ENCODE measurements at regions of chr10 and their contacts with region 1.

Region 1: DNA sequence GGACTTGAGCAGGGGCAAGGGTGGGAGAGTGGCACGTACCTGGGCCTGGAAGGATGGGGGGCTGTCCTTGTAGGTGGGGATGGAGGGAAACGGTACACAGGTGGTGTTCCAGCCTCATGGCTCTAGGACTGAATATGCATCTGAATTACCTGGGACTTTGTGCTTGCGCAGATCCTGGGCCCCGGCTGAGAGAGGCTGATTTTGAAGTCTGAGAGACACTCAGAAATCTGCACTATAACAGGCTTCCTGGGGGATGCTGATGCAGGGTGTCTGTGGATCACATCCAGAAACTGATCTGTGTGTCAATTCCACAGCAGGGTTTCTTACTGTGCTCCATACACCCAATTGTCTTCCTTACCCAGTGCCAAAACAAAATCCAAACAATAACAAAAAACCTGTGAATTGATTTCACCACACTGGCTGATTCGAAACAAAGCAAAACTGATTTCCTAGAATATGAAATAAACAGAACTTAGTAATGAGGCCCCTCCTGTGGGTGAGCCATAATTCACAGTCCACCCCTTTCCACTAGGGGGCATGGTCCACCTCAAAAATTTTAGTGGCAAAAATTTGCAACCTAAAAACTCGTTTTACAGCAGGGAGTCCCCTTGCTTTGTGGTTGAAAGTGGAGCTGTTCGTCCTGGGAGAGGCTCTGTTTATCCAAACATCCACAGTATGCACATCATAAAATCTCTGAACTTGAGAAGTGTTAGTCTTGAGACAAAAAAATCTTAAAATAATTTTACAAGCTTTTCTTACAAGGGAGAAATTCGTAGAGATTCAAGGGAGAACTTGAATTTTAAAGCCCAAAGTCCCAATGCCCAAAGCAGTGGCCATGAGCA is 32.0 kb upstream of the PLEKHA1 start:
- DNase-seq: peak; percentile 33 to 50
- H3K4me3 ChIP-seq: no peak overlapping the region
- H3K27ac ChIP-seq: no peak overlapping the region
- H3K4me1 ChIP-seq: peaks cover 0 to 6% of the 10 kb centered on the region in 2 donors
- H3K27me3 ChIP-seq: no peaks in the 10 kb centered on the region
- CTCF ChIP-seq: peak; percentile 52 to 71 (median 64)
- POLR2A ChIP-seq: no peak

Region 2: DNA sequence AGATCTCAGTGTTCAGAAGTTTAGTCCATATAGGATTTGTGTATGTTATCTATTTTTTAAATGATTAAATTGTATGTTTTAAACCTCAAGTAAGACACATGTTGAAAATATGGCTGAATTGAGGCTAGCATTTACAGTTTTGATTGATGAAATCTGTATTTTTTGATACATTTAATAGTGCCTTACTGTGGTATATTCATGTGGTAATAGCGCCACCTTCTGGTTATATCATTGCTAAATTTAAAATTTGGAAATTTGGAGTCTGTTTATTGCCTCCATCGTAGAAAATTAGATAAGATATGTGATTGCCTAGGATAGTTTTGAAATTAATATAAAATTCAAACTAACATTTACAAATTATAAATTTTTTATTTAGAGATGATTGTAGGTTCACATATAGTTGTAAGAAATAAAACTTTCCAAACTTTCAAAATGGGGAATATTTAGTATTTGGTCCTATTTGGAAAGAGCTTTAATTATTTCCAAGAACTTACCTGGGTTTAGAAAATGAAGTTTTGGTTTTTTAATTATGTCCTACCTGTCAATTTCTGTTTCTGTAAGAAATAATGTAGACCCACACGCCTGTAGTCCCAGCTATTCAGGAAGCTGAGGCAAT is 92.8 kb after region 1 on chr10:
- intact Hi-C with region 1: loop called (anchors 5 kb)
- DNase-seq: no peak
- H3K4me3 ChIP-seq: no peak overlapping the region
- H3K27ac ChIP-seq: no peak overlapping the region
- H3K4me1 ChIP-seq: no peaks in the 10 kb centered on the region
- H3K27me3 ChIP-seq: no peaks in the 10 kb centered on the region
- CTCF ChIP-seq: peak; percentile 30 to 80 (median 66)
- POLR2A ChIP-seq: no peak

Region 3: GRCh38 chr10:122494833-122495232 is 152.3 kb after region 1 on chr10:
- intact Hi-C with region 1: no loop called
- DNase-seq: peak; percentile 35 to 44
- H3K4me3 ChIP-seq: no peak overlapping the region
- H3K27ac ChIP-seq: peak overlapping the region; percentile 26 to 73 (median 55)
- H3K4me1 ChIP-seq: peaks cover 9 to 22% of the 10 kb centered on the region in 2 donors
- H3K27me3 ChIP-seq: no peaks in the 10 kb centered on the region
- CTCF ChIP-seq: no peak
- POLR2A ChIP-seq: no peak

Region 4: DNA sequence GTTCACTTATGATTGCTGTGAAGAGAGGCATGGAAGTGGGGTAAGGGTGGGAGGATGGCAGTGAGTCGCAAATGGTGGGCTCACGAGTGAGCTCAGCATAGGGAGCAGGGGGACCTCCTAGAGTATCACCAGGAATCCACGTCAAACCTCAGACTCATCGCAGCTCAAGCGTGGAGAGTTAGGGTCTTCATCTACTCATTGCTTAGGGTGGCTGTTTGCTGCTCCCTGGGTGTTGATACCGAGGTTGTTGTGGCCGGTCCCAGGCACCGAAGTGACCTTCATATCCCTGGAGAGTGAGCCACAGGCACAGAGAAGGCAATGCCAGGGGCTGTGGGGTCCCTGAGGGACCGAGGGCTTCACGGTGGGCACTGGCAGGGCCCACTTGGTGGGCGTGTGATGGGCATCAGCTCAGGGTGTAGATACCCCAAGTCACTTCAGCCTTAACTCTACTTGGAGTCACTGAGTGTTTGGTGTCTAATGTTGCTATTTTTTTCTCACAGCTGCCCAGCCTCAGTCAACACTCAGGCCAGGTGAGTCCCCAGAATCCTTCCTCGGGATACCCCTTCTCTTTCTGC is 234.9 kb after region 1 on chr10:
- intact Hi-C with region 1: no loop called
- DNase-seq: no peak
- H3K4me3 ChIP-seq: no peak overlapping the region
- H3K27ac ChIP-seq: no peak overlapping the region
- H3K4me1 ChIP-seq: no peaks in the 10 kb centered on the region
- H3K27me3 ChIP-seq: no peaks in the 10 kb centered on the region
- CTCF ChIP-seq: no peak
- POLR2A ChIP-seq: no peak